ENCODE measurements at regions of chr3 and their contacts with region 1.

Region 1: DNA sequence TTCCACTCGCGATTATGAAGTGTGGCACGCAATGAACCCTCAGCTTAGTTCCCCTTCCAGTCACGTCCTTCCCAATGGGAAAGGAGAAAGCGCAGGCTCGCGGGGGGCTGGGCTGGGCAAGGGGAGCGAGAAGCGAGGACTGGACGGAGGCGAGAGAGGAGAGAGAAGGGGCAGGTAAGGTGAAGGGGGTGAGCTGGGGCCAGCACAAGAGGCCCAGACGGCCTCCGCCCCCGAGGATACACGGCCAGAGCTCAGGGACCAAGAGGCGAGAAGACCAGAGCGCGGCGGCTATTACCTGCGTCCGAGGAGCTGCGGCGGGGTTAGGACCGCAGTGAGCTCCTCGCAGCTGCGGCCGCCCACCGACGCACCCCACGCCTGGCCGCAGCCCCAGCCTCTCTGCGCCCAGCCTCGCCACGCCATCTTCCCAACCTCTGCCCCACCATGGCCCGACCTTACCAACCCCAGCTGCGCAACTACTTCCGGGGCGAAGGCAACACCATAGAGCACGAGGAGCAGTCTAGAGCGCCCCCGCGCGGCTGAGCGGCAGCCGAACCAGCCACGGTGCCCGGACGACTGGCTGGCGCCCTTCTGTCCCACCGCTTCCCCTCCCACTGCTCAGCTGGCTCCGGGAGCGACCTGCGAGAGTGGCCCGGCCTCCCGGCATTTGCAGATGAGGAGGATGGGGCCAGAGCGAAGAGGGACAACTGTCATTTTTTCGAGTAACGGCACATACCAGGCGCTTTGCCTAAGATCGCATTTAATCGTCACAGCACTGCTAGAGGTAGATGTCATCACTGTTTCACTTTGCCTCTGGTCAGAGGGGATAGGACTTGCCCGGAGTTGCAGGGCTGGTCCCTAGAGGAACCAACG is at the start of gene PARL:
- DNase-seq: peak; percentile 95 to 99 (median 98)

Region 2: DNA sequence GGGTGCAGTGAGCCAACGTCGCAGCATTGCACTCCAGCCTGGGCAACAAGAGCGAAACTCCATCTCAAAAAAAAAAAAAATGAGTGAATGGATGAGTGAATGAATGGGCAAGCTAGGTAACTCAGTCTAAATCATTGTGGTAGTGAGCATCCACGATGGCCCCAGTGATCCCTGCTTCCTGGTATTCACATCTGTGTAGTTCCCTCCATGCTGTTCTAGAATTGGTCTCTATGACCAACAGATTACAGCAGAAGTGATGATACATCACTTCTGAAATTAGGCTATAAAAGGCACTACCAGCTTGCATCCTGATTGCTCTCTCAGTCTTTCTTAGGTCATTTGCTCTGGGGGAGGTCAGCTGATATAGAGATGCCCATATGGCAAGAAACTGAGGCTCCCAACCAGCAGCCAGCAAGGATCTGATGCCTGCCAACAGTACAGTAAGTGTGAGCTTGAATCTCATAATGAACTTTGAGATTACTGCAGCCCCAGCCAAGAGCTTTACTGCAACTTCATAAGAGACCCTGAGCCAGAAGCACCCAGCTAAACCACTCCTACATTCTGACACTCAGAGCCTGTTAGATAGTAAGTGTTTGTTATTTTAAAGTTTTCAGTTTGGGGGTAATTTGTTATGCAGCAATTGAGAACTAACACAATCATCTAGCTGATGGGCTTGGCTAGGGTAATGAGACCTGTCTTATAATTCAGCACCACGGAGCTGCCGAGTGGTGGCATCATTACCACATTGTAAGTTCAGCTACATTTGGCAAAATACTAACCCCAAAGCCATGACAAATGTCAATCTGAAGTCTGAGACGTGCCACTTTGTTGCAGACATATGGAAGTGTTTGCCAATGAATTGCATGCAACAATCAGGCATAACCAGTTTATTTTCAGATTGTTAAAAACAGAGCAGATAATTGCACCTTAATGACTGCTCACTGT is 382.2 kb before region 1 on chr3:
- intact Hi-C with region 1: loop called (anchors 2 kb)
- DNase-seq: peak in 6 of 10 donors; percentile 35 to 90 (median 47)

Region 3: DNA sequence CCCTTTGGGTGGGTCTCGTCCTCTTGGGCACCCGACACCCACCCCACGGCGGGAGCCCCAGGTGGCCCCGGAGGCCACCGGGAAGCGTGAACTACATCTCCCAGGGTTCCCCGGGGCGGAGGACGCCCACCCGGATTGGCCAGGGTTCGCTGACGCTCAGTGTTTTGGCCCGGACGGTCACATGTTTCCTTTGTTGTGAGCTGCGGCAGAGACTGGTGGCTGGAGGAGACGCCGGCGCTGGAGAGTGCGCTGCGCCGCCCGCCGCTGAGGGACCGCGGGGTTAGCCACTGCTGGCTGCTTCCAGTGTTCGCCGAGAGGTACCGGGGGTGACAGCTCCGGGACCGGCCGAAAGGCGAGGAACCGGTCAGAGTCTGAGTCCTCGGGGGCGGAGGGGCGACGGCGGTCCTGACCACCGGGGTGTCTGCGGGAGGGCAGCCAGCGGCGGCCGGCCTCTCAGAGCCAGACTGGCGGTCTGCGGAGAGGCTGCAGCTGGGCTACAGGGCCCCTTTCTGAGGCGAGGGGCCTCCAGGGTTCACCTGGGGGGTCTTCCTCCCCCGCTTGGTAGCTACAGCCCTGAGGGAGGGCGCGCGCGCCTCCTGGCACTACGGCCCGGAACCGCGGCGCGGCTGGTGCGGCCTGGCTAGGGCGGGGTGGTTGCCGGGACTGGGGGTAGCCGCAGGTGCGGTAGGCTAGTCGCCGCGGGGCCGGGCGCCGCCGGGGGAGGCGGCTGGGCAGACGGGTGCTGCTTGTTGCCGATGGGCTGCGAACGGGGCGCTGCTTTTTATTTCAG is 249.0 kb before region 1 on chr3 and contains the start of gene KLHL24:
- intact Hi-C with region 1: loop called (anchors 10 kb)
- DNase-seq: peak; percentile 95 to 99 (median 96)

Region 4: DNA sequence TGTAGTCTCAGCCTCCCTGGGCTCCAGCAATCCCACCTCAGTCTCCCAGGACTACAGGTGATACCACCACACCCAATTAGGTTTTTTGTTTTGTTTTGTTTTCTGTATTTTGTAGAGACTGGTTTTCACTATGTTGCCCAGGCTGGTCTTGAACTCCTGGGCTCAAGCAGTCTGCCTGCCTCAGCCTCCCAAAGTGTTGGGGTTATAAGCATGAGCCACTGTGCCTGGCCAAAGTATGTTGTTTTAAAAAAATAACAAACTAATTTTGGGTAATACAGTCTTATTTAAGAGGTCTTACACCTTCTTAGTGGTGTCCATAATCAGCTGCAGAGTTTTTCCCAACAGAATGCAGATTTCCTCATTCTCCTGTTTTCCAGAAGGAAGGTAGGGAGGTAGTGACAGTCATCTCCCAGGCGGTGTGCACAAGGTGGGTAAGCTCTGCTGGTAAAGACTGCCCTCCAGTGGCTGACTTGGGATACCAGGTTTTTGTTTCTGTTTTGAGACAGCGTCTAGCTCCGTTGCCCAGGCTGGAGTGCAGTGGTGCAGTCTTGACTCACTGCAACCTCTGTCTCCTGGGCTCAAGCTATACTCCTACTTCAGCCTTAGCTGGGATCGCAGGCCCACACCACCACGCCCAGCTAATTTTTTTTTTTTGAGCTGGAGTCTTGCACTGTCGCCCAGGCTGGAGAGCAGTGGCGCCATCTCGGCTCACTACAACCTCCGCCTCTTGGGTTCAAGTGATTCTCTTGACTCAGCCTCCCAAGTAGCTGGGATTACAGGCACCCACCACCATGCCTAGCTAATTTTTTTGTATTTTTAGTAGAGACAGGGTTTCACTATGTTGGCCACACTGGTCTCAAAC is 117.7 kb before region 1 on chr3:
- intact Hi-C with region 1: loop called (anchors 10 kb)
- DNase-seq: peak; percentile 31 to 95 (median 78)

Region 5: GRCh38 chr3:183825456-183826161 is 59.1 kb before region 1 on chr3 and contains the start of gene MAP6D1:
- intact Hi-C with region 1: loop called (anchors 5 kb)
- DNase-seq: peak; percentile 63 to 97 (median 70)